ENCODE measurements at regions of chr5 and their contacts with region 1.

Region 1: GRCh38 chr5:39217365-39218281 is 1.7 kb downstream of the FYB1 start:
- DNase-seq: peak; percentile 58
- H3K4me3 ChIP-seq: no peak overlapping the region
- H3K27ac ChIP-seq: no peak overlapping the region
- H3K4me1 ChIP-seq: no peaks in the 10 kb centered on the region
- CTCF ChIP-seq: peak; percentile 90

Region 2: DNA sequence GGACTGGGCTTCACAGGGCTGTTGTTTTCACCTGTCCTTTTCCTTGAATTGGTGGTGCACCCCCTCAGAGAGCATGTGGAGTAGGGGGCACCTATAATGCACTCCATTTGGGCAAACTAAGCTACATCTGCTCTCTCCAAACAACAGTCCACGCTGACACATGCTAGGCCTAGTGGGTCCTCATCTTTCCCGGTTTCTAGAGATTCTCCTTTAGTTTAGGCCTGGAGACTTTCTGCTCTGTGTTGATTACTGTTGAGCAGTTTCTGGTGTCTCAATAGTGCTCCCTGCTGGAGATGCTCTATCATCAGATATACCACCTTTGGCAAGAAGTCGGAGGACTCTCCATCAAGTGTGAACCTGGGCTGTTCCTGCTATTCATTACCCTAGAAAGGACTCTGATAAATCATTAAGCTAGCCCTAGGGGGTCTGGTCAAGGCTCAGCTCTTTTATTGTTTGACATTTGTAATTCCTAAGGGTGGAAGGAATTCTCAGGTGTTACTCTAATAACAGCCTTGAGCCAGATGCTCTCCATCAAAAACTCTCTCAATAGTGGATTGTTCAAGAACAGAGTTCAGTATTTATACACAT is 65.7 kb after region 1 on chr5:
- CTCF ChIA-PET with region 1: no interaction called
- POLR2A ChIA-PET with region 1: no interaction called
- intact Hi-C with region 1: loop called (anchors 10 kb)
- DNase-seq: peak; percentile 21
- H3K4me3 ChIP-seq: no peak overlapping the region
- H3K27ac ChIP-seq: no peak overlapping the region
- H3K4me1 ChIP-seq: no peaks in the 10 kb centered on the region
- CTCF ChIP-seq: peak; percentile 66

Region 3: DNA sequence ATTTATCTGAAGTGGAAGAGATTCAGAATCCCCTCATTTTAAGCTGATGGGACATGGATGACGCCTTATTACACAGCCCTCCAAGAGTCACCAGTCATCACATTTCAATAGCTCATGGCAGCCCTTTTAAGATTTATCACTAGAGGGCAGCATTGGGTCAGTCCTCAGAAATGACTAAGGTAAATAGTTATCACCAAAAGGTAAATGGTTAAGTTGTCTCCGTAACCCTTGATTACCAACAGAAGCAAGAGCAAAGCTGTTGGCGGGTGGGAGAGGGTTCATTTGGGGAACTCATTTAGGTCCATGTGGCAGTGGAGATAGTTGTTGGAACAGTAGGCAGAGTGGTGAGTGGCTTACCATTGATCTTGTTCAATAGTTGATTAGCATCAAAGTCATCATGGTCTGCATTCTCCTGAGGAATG is 158.7 kb after region 1 on chr5:
- CTCF ChIA-PET with region 1: interaction called, 3 read pairs
- POLR2A ChIA-PET with region 1: no interaction called
- intact Hi-C with region 1: loop called (anchors 10 kb)
- DNase-seq: peak; percentile 50
- H3K4me3 ChIP-seq: no peak overlapping the region
- H3K27ac ChIP-seq: no peak overlapping the region
- H3K4me1 ChIP-seq: no peaks in the 10 kb centered on the region
- CTCF ChIP-seq: peak; percentile 83

Region 4: DNA sequence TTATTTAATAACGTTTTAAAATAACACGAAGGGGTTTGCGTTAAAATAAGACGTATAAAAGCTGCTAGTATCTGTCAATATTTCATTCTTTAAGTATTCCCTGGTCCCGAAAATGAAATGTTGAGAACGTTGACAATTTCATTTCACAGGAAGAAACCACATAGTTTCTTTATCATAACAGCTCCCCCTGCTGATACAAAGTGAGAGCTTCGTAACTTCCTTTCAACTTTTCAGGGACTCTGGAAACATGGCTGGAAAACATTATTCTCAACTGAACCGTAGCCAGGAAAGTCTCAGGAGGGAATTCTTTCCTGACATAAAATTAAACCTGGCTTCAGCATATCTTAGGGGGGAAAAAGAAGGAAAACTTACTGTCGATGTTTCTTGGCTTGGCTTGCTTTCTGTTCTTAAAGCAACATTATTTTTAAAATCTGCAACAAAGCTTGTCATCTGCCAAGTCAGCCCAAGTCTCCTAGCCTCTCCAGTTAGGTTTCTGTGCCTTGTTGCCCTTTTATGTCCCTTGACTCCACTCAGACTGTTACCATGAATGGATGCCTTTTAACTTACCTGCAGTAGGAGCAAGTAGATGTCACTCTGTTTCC is 330.0 kb after region 1 on chr5:
- CTCF ChIA-PET with region 1: no interaction called
- POLR2A ChIA-PET with region 1: no interaction called
- intact Hi-C with region 1: loop called (anchors 1 kb)
- DNase-seq: peak; percentile 38
- H3K4me3 ChIP-seq: no peak overlapping the region
- H3K27ac ChIP-seq: no peak overlapping the region
- H3K4me1 ChIP-seq: no peaks in the 10 kb centered on the region
- CTCF ChIP-seq: peak; percentile 86